Sciatic nerve (tissue), 2 donors: ENCODE measurements at regions of chr9 and their contacts with region 1.

Region 1: GRCh38 chr9:70602321-70603019 is 188.0 kb upstream of the KLF9 start:
- DNase-seq: no peak
- ATAC-seq: peak; percentile 68

Region 2: DNA sequence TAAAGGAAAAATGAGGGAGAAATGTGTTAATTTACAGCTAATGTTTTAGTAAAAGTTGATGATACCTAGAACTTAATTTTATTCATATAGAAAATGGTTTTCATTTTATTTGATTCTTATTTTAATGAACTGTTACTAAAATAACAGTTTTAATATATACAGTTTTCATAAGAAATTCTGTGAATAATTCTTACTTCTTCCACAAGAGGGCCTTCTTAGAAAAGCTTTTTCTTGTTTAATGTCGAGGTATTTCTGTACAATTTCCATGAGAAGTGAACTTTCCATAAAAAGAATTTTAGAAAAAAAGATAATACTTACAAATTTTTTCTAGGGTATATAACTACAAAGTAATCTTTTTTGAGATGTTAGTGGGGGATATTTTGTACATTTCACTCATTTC is 261.9 kb before region 1 on chr9:
- intact Hi-C with region 1: loop called (anchors 5 kb)
- DNase-seq: no peak
- ATAC-seq: no peak

Region 3: GRCh38 chr9:70406434-70406862 is 196.0 kb before region 1 on chr9:
- intact Hi-C with region 1: loop called (anchors 5 kb)
- DNase-seq: no peak
- ATAC-seq: peak; percentile 6

Region 4: GRCh38 chr9:70484210-70485130 is 118.0 kb before region 1 on chr9:
- intact Hi-C with region 1: loop called (anchors 10 kb)
- DNase-seq: no peak
- ATAC-seq: peak; percentile 61

Region 5: DNA sequence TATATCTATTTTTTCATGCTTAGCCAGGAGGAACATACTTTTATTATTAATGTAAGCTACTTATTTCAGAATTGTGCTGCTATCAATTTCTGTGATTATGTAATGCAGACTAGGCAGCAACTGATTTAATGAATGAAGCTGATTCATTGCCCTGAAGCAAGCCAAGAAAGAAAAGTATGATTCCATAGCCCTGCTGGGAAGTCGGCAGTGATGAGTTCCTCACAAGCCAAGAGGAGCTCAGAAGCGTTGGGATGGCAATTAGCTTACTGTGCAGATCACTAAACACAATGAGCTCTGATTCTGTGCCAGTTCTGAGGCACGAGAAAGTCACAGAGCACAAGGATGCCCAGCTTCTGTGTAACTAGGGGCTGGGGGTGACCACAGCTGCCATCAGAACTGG is 66.3 kb after region 1 on chr9:
- intact Hi-C with region 1: no loop called
- DNase-seq: no peak
- ATAC-seq: peak; percentile 69

Region 6: DNA sequence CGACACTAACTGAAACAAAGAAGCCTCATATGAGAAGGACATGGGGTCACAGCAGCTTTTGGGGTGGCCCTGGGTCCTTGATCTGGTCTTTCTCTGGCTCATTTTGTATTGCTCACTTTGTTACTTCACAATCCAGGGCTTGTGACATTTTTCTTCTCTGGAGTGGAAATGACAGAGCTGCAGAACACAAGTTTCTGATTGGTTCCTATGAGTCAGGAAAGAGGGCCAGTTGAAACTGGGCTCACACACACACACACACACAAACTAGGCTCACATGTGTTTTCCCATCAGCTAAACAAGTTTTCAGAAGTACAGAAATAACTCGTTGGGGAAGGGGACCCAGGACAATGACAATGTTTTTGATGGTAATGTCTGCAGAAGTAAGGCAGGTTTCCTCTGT is 1973.2 kb after region 1 on chr9:
- intact Hi-C with region 1: no loop called
- DNase-seq: no peak
- ATAC-seq: no peak